Activated CD4-positive, alpha-beta memory T cell treated with anti-CD3 and anti-CD28 coated beads for 36 hours (primary cell): ENCODE measurements at regions of chr21 and their contacts with region 1.

Region 1: GRCh38 chr21:25708467-25709065 is 26.1 kb downstream of the ATP5PF start:
- DNase-seq: peak; percentile 48
- H3K4me3 Mint-ChIP-seq: no peak overlapping the region
- H3K27ac Mint-ChIP-seq: no peak overlapping the region
- H3K4me1 Mint-ChIP-seq: peaks cover 4% of the 10 kb centered on the region
- H3K27me3 Mint-ChIP-seq: no peaks in the 10 kb centered on the region

Region 2: DNA sequence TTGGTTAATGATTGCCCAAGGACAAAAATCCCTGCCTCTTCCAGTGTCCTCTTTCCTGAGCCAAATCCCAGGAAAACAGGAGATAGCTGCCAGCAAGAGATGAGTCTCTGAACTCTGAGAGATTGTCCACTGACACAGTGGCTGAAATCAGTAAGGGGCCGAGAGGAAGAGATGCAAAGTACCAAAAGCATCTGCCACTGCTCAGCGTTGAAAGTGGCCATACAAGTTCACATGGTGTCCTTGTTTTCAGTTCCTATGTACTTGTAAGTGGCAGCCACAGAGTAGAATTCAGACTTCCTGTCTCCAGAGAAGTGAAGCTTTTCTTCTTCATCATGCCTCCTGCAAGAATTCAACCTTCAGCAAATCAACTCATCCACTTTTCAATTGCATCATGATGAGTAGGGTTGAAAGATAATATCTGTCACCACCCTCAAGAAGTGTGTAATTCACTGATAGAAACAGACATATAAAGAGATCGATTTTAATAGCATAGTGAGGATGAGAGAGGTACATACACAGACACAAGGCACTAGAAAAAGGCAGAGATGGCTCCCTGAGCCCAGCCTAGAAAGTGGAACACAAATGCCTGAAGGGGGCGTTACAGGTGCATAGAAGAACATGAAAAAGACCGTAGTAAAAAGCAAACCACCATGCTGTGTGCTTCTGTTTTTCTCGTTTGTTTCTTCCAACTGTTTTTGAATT is 287.1 kb before region 1 on chr21:
- CTCF ChIA-PET with region 1: no interaction called
- POLR2A ChIA-PET with region 1: no interaction called
- intact Hi-C with region 1: loop called (anchors 1 kb)
- DNase-seq: peak; percentile 79
- H3K4me3 Mint-ChIP-seq: peak overlapping the region; percentile 67
- H3K27ac Mint-ChIP-seq: peak overlapping the region; percentile 89
- H3K4me1 Mint-ChIP-seq: peaks cover 62% of the 10 kb centered on the region
- H3K27me3 Mint-ChIP-seq: no peaks in the 10 kb centered on the region

Region 3: GRCh38 chr21:25639551-25640201 is 68.9 kb before region 1 on chr21:
- CTCF ChIA-PET with region 1: interaction called, 5 read pairs
- POLR2A ChIA-PET with region 1: no interaction called
- intact Hi-C with region 1: loop called (anchors 2 kb)
- DNase-seq: peak; percentile 58
- H3K4me3 Mint-ChIP-seq: peak overlapping the region; percentile 57
- H3K27ac Mint-ChIP-seq: no peak overlapping the region
- H3K4me1 Mint-ChIP-seq: peaks cover 30% of the 10 kb centered on the region
- H3K27me3 Mint-ChIP-seq: peaks cover 25% of the 10 kb centered on the region

Region 4: DNA sequence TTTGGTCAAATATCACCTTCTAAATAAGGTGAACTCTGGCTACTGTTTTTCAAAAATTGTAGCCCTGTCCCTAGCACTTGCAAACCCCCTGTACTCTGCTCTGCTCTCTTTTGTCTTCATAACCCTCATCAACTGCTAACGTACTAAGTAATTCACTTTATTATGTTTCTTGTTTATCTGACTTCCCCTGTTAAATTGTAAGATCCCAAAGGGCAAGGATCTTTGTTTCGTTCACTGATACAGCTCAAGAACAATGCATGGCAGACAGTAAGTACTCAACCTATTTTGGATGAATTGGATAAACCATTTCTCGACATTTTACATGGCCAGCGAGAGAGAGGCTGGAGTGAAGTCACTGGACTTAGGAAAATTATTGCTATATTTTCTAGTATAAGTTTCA is 20.8 kb before region 1 on chr21:
- CTCF ChIA-PET with region 1: no interaction called
- POLR2A ChIA-PET with region 1: no interaction called
- intact Hi-C with region 1: no loop called
- DNase-seq: no peak
- H3K4me3 Mint-ChIP-seq: no peak overlapping the region
- H3K27ac Mint-ChIP-seq: no peak overlapping the region
- H3K4me1 Mint-ChIP-seq: no peaks in the 10 kb centered on the region
- H3K27me3 Mint-ChIP-seq: peaks cover 3% of the 10 kb centered on the region

Region 5: DNA sequence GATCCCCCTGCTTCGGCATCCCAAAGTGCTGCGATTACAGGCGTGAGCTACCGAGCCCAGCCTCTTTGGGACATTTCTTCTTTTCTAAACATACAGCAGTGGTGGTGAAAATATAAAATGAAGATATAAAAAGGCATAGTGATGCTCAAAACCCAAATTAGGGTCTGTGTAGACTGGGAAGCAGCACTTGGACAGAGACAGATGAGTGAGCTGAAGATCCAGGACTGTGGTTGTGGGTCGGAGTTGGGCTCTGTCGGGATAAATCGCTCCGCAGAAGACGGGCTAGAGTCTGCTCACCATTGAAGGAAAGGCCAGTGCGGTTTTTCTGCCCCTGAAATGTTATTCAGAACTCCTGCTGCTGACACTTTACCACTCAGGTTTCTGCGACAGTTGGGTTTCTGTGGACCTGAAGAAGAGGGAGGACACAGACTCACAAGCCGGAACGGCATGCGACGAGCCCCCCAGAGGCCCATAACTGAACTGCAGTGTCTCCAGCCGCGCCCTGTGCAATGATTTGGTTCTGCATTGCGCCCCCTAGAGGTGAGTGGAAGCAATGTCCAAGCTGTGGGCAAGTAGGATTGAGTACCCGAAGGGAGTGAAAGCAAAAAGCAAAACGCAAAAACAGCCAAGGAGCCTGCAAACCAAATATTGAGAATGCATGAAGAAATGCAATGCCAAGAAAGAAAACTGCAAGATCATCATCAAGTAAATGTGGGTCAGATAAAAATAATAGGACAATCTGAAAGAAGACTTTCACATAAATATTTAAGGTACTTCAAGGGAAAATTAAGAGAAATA is 92.8 kb after region 1 on chr21:
- CTCF ChIA-PET with region 1: interaction called, 4 read pairs
- POLR2A ChIA-PET with region 1: no interaction called
- intact Hi-C with region 1: loop called (anchors 2 kb)
- DNase-seq: peak; percentile 93
- H3K4me3 Mint-ChIP-seq: no peak overlapping the region
- H3K27ac Mint-ChIP-seq: no peak overlapping the region
- H3K4me1 Mint-ChIP-seq: peaks cover 6% of the 10 kb centered on the region
- H3K27me3 Mint-ChIP-seq: peaks cover 16% of the 10 kb centered on the region